ENCODE measurements at regions of chr7 and their contacts with region 1.

Region 1: GRCh38 chr7:39691821-39692220 is 68.4 kb downstream of the RALA start:
- DNase-seq: no peak
- ATAC-seq: no peak
- H3K4me3 ChIP-seq: no peak overlapping the region
- H3K4me3 Mint-ChIP-seq: no peak overlapping the region
- H3K27ac ChIP-seq: no peak overlapping the region
- H3K27ac Mint-ChIP-seq: peak overlapping the region in 2 of 9 donors; percentile 34 to 87
- H3K4me1 ChIP-seq: no peaks in the 10 kb centered on the region
- H3K4me1 Mint-ChIP-seq: peaks cover 0 to 7% (median 0%) of the 10 kb centered on the region in 7 donors
- H3K27me3 ChIP-seq: no peaks in the 10 kb centered on the region
- H3K27me3 Mint-ChIP-seq: no peaks in the 10 kb centered on the region

Region 2: GRCh38 chr7:39184380-39184779 is 507.4 kb before region 1 on chr7:
- CTCF ChIA-PET with region 1: no interaction called
- POLR2A ChIA-PET with region 1: no interaction called
- intact Hi-C with region 1: no loop called
- DNase-seq: no peak
- ATAC-seq: no peak
- H3K4me3 ChIP-seq: no peak overlapping the region
- H3K4me3 Mint-ChIP-seq: no peak overlapping the region
- H3K27ac ChIP-seq: no peak overlapping the region
- H3K27ac Mint-ChIP-seq: no peak overlapping the region
- H3K4me1 ChIP-seq: no peaks in the 10 kb centered on the region
- H3K4me1 Mint-ChIP-seq: peaks cover 0 to 2% (median 0%) of the 10 kb centered on the region in 7 donors
- H3K27me3 ChIP-seq: no peaks in the 10 kb centered on the region
- H3K27me3 Mint-ChIP-seq: peaks cover 0 to 15% (median 4%) of the 10 kb centered on the region in 5 donors

Region 3: DNA sequence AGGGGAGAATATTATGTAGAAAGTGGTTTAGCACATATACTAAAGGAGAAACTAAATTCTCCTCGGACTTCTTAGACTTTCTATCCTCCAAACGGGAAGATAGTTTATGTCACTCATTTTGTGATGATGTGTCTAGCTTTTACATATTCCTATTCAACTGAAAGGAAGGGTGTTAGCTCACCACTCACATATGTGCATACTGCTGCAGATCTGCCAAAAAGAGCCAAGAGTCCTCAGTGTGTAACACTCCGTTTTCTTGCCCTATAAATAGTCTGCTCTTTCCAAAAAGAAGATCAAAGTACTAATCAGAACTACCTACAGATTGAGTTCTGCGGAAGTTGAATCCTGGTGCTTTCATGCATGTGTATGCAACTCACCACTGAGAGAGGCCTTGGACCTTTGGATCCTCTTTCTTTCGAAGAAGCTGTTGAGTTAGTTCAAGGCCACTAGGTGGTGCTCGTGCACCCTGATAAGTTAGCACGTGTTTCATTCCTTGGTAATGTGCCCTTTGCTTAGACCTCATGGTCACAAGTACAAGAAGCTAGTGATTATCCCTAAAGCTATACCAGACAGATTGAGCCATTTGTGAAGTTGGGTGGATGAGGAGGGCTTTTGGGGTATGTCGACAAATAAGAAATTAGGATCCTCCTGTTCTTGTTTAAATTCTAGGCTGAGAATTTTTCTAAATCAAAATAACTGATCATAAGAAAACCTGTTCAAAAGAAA is 111.5 kb before region 1 on chr7:
- CTCF ChIA-PET with region 1: no interaction called
- POLR2A ChIA-PET with region 1: no interaction called
- intact Hi-C with region 1: loop called in 1 of 2 experiments (anchors 5 kb)
- DNase-seq: peak; percentile 38 to 79 (median 73)
- ATAC-seq: peak; percentile 98
- H3K4me3 ChIP-seq: no peak overlapping the region
- H3K4me3 Mint-ChIP-seq: no peak overlapping the region
- H3K27ac ChIP-seq: no peak overlapping the region
- H3K27ac Mint-ChIP-seq: peak overlapping the region in 5 of 9 donors; percentile 23 to 61 (median 44)
- H3K4me1 ChIP-seq: no peaks in the 10 kb centered on the region
- H3K4me1 Mint-ChIP-seq: peaks cover 2 to 12% (median 10%) of the 10 kb centered on the region in 7 donors
- H3K27me3 ChIP-seq: no peaks in the 10 kb centered on the region
- H3K27me3 Mint-ChIP-seq: no peaks in the 10 kb centered on the region

Region 4: DNA sequence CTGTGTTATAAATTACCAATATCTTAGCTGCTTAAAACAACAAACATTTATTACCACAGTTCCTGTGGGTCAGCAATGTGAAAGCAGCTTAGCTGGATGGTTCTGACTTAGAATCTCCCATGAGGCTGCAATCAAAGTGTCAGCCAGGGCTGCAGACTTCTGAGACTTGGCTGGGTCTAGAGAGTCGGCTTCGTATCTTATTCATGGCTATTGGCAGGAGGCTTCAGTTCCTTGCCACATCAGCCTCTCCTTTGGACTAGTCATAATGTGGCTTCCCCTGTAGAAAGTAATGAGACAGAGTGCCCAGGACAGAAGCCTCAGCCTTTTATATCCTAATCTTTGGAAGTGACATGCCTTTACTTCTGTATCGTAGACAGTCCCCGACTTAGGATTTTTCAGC is 41.1 kb before region 1 on chr7:
- CTCF ChIA-PET with region 1: no interaction called
- POLR2A ChIA-PET with region 1: no interaction called
- intact Hi-C with region 1: loop called in 1 of 2 experiments (anchors 5 kb)
- DNase-seq: no peak
- ATAC-seq: no peak
- H3K4me3 ChIP-seq: no peak overlapping the region
- H3K4me3 Mint-ChIP-seq: no peak overlapping the region
- H3K27ac ChIP-seq: no peak overlapping the region
- H3K27ac Mint-ChIP-seq: no peak overlapping the region
- H3K4me1 ChIP-seq: no peaks in the 10 kb centered on the region
- H3K4me1 Mint-ChIP-seq: peaks cover 3 to 61% (median 49%) of the 10 kb centered on the region in 7 donors
- H3K27me3 ChIP-seq: no peaks in the 10 kb centered on the region
- H3K27me3 Mint-ChIP-seq: no peaks in the 10 kb centered on the region

Measured in naive thymus-derived CD4-positive, alpha-beta T cell (primary cell).